Right ventricle myocardium inferior (tissue), 1 donor: ENCODE measurements at regions of chr19 and their contacts with region 1.

Region 1: GRCh38 chr19:34556488-34556887 is 74.9 kb downstream of the WTIP start:
- DNase-seq: no peak
- ATAC-seq: peak; percentile 67

Region 2: DNA sequence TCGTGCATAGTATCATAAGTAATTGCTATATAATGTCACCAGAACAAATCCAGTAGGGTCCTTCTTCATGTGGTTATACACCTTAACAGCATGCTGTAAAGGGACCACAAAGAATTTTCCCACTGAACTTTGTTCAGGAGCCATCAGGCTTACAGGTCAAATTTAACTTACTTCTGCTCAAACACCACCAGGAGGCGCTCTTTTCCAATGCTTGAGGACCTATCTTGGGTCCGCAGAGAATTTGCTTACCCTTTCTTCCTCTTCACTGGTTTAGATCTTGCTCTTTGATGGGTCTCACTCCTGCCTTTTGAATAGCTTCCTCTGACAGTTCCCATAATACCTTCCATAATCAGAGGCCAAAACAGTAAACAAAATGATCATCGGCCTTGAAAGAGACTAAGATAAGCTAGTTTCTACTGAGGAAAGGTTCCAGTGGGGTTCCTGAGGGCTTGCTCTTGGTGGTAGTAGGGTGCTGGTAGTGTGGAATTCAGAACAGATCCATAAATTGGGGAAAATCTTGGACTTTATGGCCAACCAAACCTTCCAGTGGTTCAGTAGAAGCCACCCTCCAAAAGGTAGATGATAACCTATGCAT is 83.1 kb after region 1 on chr19:
- intact Hi-C with region 1: loop called (anchors 5 kb)
- DNase-seq: no peak
- ATAC-seq: peak; percentile 54